ENCODE measurements at regions of chr1 and their contacts with region 1.

Region 1: DNA sequence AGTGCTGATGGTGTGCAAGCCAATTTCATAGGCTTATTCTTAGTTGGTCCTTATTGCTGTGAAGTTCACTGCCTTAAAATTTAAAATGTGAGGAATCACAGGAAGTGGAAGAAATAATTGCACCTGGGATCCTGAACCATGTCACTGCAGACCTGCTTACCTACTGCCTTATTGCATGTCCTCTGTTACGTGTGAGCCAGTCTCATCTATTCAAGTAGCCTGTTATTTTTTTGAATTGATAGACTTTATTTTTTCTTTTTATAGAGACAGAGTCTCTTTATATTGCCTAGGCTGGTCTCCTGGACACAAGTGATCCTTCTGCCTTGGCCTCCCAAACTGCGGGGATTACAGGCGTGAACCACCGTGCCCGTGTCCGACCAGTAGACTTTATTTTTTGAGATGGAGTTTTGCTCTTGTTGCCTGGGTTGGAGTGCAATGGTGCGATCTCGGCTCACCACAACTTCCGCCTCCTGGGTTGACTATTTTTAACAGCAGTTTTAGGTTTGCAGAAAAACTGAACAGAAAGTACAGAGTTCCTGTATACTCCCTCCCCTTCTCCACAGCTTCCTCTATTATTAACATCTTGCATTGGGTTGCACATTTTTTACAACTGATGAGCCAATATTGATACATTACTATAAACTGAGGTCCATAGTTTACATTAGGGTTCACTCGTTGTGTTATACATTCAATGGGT is 14.0 kb upstream of the DISC1 start:
- DNase-seq: peak; percentile 51
- ATAC-seq: peak; percentile 93
- H3K4me3 Mint-ChIP-seq: peak overlapping the region; percentile 68
- H3K27ac Mint-ChIP-seq: peak overlapping the region; percentile 78
- H3K4me1 Mint-ChIP-seq: peaks cover 65% of the 10 kb centered on the region
- H3K27me3 Mint-ChIP-seq: peaks cover 3% of the 10 kb centered on the region
- CTCF ChIP-seq: no peak

Region 2: DNA sequence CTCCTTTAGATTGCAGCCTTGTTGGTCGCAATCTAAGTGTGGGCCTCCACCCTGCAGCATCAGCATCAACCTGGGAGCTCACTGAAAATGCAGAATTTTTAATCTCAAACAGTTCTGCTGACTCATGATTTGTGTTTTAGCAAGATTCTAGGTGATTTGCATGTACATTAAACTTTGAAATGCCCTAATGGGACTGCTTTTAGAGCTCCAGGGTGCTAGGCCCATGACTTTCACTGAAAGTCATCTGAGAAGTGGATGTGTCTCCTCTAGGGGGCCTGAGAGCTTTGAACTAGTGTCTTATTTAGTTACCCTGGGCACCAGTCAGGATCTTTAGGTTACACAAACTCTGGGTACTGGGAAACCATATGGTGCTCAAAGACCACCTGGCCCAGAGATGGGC is 441.7 kb before region 1 on chr1:
- CTCF ChIA-PET with region 1: no interaction called
- POLR2A ChIA-PET with region 1: no interaction called
- intact Hi-C with region 1: no loop called
- DNase-seq: no peak
- ATAC-seq: no peak
- H3K4me3 Mint-ChIP-seq: no peak overlapping the region
- H3K27ac Mint-ChIP-seq: no peak overlapping the region
- H3K4me1 Mint-ChIP-seq: no peaks in the 10 kb centered on the region
- H3K27me3 Mint-ChIP-seq: peaks cover 44% of the 10 kb centered on the region
- CTCF ChIP-seq: no peak

Region 3: DNA sequence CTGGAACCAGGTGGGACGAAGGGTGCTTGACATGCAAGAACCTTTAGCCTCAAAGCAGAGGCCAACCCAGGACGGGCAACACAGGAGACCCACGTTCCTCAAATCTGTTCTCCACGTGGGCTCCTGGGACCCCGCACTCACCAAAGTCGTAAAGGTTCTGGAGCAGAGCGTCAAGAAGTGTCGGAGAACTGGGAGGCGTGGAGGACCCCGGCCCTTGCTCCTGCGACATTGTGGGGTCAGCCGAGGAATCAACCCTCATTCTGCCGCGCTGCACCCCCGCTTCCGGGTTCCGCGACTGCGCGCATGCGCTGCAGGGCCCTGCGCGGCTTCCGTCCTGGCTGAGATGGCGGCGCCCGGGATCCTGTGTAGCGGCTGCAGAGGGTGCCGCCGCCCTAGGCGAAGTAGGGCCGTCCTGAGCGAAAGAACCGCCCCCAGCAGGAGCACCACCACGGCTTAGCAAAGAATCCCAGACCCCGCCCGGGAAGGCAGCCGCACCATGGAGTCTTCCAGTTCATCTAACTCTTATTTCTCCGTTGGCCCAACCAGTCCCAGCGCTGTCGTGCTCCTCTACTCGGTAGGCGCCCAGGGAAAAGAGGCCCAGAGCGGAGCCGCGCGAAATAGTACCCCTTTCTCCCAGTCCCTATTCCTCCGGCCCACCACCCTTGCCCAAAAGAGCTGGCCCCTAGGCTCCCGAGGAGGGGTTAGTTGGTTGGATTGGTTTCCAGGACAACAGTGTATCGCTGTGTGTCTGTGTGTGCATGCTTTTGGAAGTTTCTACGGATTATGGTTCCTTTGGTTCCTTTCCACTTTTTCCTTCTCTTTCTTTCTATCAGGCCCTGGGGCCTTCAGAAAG is 371.4 kb before region 1 on chr1 and contains the start of gene GNPAT:
- CTCF ChIA-PET with region 1: no interaction called
- POLR2A ChIA-PET with region 1: no interaction called
- intact Hi-C with region 1: loop called (anchors 5 kb)
- DNase-seq: peak; percentile 94
- ATAC-seq: peak; percentile 98
- H3K4me3 Mint-ChIP-seq: peak within 1 kb of the TSS; percentile 93
- H3K27ac Mint-ChIP-seq: peak within 1 kb of the TSS; percentile 94
- H3K4me1 Mint-ChIP-seq: peaks cover 58% of the 10 kb centered on the region
- H3K27me3 Mint-ChIP-seq: no peaks in the 10 kb centered on the region
- CTCF ChIP-seq: no peak
- total RNA-seq, gene GNPAT: 45.7 and 47.4 TPM in 2 replicates

Region 4: GRCh38 chr1:231487019-231487418 is 125.5 kb before region 1 on chr1:
- CTCF ChIA-PET with region 1: no interaction called
- POLR2A ChIA-PET with region 1: no interaction called
- intact Hi-C with region 1: no loop called
- DNase-seq: no peak
- ATAC-seq: no peak
- H3K4me3 Mint-ChIP-seq: no peak overlapping the region
- H3K27ac Mint-ChIP-seq: no peak overlapping the region
- H3K4me1 Mint-ChIP-seq: no peaks in the 10 kb centered on the region
- H3K27me3 Mint-ChIP-seq: no peaks in the 10 kb centered on the region
- CTCF ChIP-seq: no peak

Region 5: DNA sequence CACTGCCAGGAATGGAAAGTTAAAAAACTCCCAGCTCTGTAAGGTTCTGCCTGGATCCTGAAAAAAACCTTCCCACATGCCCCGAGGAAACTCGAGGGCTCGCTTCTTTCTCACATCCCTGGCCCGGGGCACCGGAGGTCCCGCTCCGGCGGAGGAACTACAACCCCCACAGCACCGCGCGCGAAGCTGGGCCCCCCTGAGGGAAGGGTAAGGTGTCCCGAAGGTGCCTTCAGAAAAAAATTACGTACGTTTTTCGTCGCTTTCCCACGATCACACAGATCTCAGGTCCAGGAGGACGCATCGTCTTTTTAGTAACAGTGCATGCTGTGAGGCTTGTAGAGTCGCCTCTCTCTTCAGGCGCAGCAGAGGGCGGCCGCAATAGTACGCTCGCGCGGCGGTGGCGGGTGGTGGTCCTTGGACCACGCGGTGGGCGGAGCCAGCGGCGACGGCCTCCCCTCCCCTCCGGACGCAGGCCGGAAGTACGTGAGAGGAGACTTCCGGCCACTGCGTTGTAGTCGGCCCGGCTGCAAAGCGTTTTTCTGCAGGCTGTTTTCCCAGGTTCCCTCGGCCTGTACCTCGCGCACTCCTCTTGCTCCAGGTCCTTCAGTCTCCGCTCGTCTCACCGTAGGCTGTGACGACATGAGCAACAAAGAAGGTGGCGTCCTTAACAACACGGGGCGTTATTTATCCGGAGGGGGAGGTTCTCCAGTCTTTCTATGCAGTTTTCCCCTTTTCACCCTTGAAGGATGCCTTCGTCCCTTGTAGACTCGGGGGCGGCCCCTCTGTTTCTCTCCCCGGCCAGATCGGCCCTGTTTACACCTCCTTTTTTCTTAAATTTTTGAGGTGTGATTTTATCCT is 84.1 kb before region 1 on chr1 and contains the start of gene TSNAX:
- CTCF ChIA-PET with region 1: no interaction called
- POLR2A ChIA-PET with region 1: no interaction called
- intact Hi-C with region 1: loop called (anchors 1 kb)
- DNase-seq: peak; percentile 89
- ATAC-seq: peak; percentile 95
- H3K4me3 Mint-ChIP-seq: peak within 1 kb of the TSS; percentile 99
- H3K27ac Mint-ChIP-seq: peak within 1 kb of the TSS; percentile 100
- H3K4me1 Mint-ChIP-seq: peaks cover 33% of the 10 kb centered on the region
- H3K27me3 Mint-ChIP-seq: no peaks in the 10 kb centered on the region
- CTCF ChIP-seq: no peak
- total RNA-seq, gene TSNAX: 30.0 and 38.7 TPM in 2 replicates

Region 6: GRCh38 chr1:231626535-231626945 is 14.0 kb after region 1 on chr1 and contains the start of gene DISC1:
- CTCF ChIA-PET with region 1: no interaction called
- POLR2A ChIA-PET with region 1: interaction called, 6 read pairs
- intact Hi-C with region 1: loop called (anchors 1 kb)
- DNase-seq: peak; percentile 34
- ATAC-seq: peak; percentile 72
- H3K4me3 Mint-ChIP-seq: peak within 1 kb of the TSS; percentile 87
- H3K27ac Mint-ChIP-seq: peak within 1 kb of the TSS; percentile 76
- H3K4me1 Mint-ChIP-seq: peaks cover 23% of the 10 kb centered on the region
- H3K27me3 Mint-ChIP-seq: peaks cover 11% of the 10 kb centered on the region
- CTCF ChIP-seq: no peak
- total RNA-seq, gene DISC1: 2.4 TPM in 2 replicates

Region 7: GRCh38 chr1:231691618-231692259 is 79.2 kb after region 1 on chr1:
- CTCF ChIA-PET with region 1: no interaction called
- POLR2A ChIA-PET with region 1: no interaction called
- intact Hi-C with region 1: loop called (anchors 5 kb)
- DNase-seq: no peak
- ATAC-seq: no peak
- H3K4me3 Mint-ChIP-seq: no peak overlapping the region
- H3K27ac Mint-ChIP-seq: no peak overlapping the region
- H3K4me1 Mint-ChIP-seq: peaks cover 12% of the 10 kb centered on the region
- H3K27me3 Mint-ChIP-seq: peaks cover 62% of the 10 kb centered on the region
- CTCF ChIP-seq: no peak

Region 8: GRCh38 chr1:232038706-232039677 is 426.5 kb after region 1 on chr1:
- CTCF ChIA-PET with region 1: no interaction called
- POLR2A ChIA-PET with region 1: no interaction called
- intact Hi-C with region 1: no loop called
- DNase-seq: no peak
- ATAC-seq: no peak
- H3K4me3 Mint-ChIP-seq: no peak overlapping the region
- H3K27ac Mint-ChIP-seq: no peak overlapping the region
- H3K4me1 Mint-ChIP-seq: no peaks in the 10 kb centered on the region
- H3K27me3 Mint-ChIP-seq: no peaks in the 10 kb centered on the region
- CTCF ChIP-seq: no peak

Measured in activated B cell treated with CpG ODN at 0.5 μM for 24 hours (primary cell).